ENCODE measurements at regions of chr16 and their contacts with region 1.

Region 1: GRCh38 chr16:55842369-55843104 is 9.6 kb upstream of the CES1 start:
- DNase-seq: peak in 2 of 5 donors; percentile 67
- H3K4me3 ChIP-seq: no peak overlapping the region
- H3K27ac ChIP-seq: no peak overlapping the region
- H3K4me1 ChIP-seq: no peaks in the 10 kb centered on the region
- H3K27me3 ChIP-seq: no peaks in the 10 kb centered on the region
- CTCF ChIP-seq: peak; percentile 77

Region 2: GRCh38 chr16:55465077-55465896 is 377.2 kb before region 1 on chr16:
- intact Hi-C with region 1: loop called (anchors 10 kb)
- DNase-seq: peak; percentile 89 to 93 (median 90)
- H3K4me3 ChIP-seq: no peak overlapping the region
- H3K27ac ChIP-seq: no peak overlapping the region
- H3K4me1 ChIP-seq: peaks cover 0 to 3% (median 0%) of the 10 kb centered on the region in 3 donors
- H3K27me3 ChIP-seq: no peaks in the 10 kb centered on the region
- CTCF ChIP-seq: peak; percentile 100

Region 3: DNA sequence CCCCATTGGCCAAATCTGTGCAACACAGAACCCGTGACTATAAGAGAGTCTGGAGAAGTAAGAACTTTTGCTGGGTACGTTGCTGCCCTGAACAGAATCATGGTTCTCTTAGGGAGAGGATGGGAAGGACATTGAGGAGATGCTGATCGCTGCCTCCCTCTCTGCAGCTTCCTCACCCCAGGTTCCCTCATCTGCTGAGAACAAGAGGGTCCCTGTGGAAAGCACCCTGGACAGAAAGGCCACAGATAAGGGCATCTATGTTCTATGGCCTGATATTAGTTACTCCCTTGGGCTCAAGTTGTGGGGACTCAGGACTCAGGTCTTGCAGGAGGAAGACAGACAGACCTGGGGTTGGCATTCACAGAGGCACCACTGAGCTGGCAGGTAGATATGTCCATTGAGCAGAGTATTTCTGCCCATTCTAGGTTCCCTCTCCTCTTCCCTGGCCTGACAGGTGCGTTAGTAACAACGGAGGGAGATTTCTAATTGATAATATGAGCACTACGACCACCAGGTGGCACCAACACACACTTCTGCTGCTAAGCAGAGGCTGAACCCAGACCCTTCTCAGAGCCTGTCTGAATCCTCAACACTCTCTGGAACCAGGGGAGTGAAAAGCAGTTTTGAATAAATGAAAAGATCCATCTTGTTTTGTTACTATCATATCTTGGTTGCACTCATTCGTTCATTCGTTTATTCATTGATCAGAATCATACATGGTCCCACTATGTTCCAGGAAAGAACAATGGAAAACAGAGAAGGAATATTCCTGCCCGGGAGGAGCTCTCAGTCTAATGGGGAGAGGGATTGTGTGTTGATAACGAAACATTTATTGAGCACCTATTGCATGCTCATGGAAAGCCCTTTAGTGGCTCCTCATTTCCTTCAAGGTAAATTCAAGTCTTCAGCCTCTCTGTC is 130.3 kb before region 1 on chr16:
- intact Hi-C with region 1: loop called (anchors 5 kb)
- DNase-seq: peak in 4 of 5 donors; percentile 61 to 82 (median 70)
- H3K4me3 ChIP-seq: no peak overlapping the region
- H3K27ac ChIP-seq: no peak overlapping the region
- H3K4me1 ChIP-seq: no peaks in the 10 kb centered on the region
- H3K27me3 ChIP-seq: no peaks in the 10 kb centered on the region
- CTCF ChIP-seq: peak; percentile 65

Measured in kidney (tissue), 22 donors.